B cell (primary cell): ENCODE measurements at regions of chr4 and their contacts with region 1.

Region 1: GRCh38 chr4:25903900-25904747 is 9.9 kb upstream of the SMIM20 start:
- DNase-seq: peak; percentile 66
- ATAC-seq: peak; percentile 79
- H3K4me3 ChIP-seq: peak overlapping the region in 1 of 5 experiments; percentile 36
- H3K4me3 Mint-ChIP-seq: peak overlapping the region; percentile 74
- H3K27ac ChIP-seq: peak overlapping the region; percentile 61 to 85
- H3K27ac Mint-ChIP-seq: peak overlapping the region; percentile 91
- H3K4me1 ChIP-seq: peaks cover 36 to 43% of the 10 kb centered on the region in 2 donors
- H3K4me1 Mint-ChIP-seq: peaks cover 54% of the 10 kb centered on the region
- H3K27me3 ChIP-seq: no peaks in the 10 kb centered on the region
- H3K27me3 Mint-ChIP-seq: no peaks in the 10 kb centered on the region
- CTCF ChIP-seq: no peak

Region 2: DNA sequence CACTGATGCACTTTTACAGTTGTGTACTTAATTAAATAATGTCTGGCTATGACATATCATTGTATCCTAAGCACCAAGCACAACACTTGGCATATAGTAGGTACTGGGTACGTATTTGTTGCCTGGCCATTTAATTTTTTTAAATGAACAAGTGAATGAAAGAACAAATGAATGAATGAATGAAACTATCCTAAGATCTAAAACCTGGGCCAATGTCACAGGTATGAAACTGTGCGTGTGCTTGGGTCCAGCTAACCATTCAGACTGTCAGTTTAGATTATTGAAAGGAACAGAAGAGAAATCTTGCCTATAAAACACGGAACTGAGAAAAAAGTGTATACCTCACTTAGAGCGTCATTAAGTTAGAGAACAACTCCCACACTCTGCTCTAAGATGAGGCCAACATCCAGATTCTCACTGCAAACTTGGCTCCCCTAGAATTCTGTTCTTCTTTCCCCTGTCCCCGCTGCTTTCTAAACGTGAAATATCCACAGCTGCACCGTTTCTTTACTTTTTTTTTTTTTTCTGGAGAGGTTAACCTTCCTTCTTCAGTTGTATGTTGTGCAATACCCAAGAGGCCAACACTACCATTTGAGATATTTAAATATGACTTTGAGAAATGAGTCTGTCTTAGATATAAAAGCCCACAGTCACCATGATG is 24.0 kb before region 1 on chr4:
- CTCF ChIA-PET with region 1: interaction called, 13 read pairs
- POLR2A ChIA-PET with region 1: interaction called, 3 read pairs
- intact Hi-C with region 1: no loop called
- DNase-seq: peak; percentile 68
- ATAC-seq: peak; percentile 48
- H3K4me3 ChIP-seq: no peak overlapping the region
- H3K4me3 Mint-ChIP-seq: peak overlapping the region; percentile 82
- H3K27ac ChIP-seq: peak overlapping the region; percentile 70 to 71
- H3K27ac Mint-ChIP-seq: peak overlapping the region; percentile 97
- H3K4me1 ChIP-seq: peaks cover 70 to 76% of the 10 kb centered on the region in 2 donors
- H3K4me1 Mint-ChIP-seq: peaks cover 80% of the 10 kb centered on the region
- H3K27me3 ChIP-seq: no peaks in the 10 kb centered on the region
- H3K27me3 Mint-ChIP-seq: no peaks in the 10 kb centered on the region
- CTCF ChIP-seq: no peak